Panc1 (cell line): ENCODE measurements at regions of chr5 and their contacts with region 1.

Region 1: GRCh38 chr5:79151942-79152671 is 40.5 kb downstream of the BHMT start:
- DNase-seq: no peak
- ATAC-seq: no peak
- H3K4me3 ChIP-seq: no peak overlapping the region
- H3K27ac ChIP-seq: no peak overlapping the region
- H3K4me1 ChIP-seq: no peaks in the 10 kb centered on the region
- H3K27me3 ChIP-seq: peaks cover 2% of the 10 kb centered on the region; the same call in 1 of the 2 replicates
- CTCF ChIP-seq: no peak

Region 2: GRCh38 chr5:78841767-78842166 is 310.3 kb before region 1 on chr5:
- CTCF ChIA-PET with region 1: no interaction called
- POLR2A ChIA-PET with region 1: no interaction called
- in situ Hi-C with region 1: no loop called
- intact Hi-C with region 1: no loop called
- DNase-seq: no peak
- ATAC-seq: no peak
- H3K4me3 ChIP-seq: no peak overlapping the region
- H3K27ac ChIP-seq: no peak overlapping the region
- H3K4me1 ChIP-seq: no peaks in the 10 kb centered on the region
- H3K27me3 ChIP-seq: no peaks in the 10 kb centered on the region
- CTCF ChIP-seq: no peak

Region 3: DNA sequence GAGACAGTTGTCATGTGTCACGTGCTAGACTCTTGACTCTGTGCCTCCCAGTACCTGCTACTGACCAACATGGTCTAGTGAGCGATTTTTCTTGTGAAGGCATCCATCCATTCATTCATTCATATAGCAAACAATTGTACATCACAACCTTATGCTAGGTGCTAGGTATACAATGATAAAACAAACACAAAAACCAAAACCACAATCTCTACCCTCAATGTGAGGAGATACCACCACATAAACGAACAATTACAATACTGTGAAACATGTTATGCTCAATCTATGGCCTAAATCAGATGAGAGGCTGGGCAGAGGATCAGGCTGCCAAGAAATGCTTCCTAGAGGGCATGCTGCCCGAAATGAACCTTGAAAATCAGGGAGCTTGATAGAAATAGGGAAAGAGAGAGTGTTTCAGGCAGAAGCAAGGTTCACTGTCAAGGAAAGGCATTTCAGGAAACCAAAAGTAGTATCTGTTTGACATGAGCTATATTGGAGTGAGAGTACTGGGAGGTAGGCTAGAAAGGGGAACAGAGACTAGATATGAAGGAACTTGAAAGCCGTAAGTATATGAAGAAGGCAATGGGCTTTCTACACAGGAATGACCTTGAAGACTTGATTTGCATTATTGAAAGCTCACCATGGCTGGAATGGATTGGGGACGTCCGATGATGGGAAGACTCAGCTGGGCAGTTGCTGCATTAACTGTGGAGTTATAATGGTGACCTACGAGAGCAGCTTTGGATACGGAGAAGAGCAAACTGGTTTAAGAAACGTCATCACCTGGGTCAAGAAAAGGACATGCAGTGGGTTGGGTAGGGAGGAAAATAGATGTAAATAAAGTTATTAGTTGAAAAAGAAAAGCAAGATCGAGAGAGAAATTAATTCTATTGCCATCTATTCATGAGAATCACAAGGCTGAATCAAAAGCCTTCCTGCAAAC is 973.2 kb after region 1 on chr5:
- CTCF ChIA-PET with region 1: no interaction called
- POLR2A ChIA-PET with region 1: interaction called, 12 read pairs
- in situ Hi-C with region 1: no loop called
- intact Hi-C with region 1: no loop called
- DNase-seq: no peak
- ATAC-seq: no peak
- H3K4me3 ChIP-seq: no peak overlapping the region
- H3K27ac ChIP-seq: no peak overlapping the region
- H3K4me1 ChIP-seq: no peaks in the 10 kb centered on the region
- H3K27me3 ChIP-seq: no peaks in the 10 kb centered on the region
- CTCF ChIP-seq: no peak